Activated CD4-positive, alpha-beta memory T cell treated with anti-CD3 and anti-CD28 coated beads, Interleukin-2, amount 10 ng/mL, durations not matched to agents 7 days and 5 days (primary cell): ENCODE measurements at regions of chr3 and their contacts with region 1.

Region 1: DNA sequence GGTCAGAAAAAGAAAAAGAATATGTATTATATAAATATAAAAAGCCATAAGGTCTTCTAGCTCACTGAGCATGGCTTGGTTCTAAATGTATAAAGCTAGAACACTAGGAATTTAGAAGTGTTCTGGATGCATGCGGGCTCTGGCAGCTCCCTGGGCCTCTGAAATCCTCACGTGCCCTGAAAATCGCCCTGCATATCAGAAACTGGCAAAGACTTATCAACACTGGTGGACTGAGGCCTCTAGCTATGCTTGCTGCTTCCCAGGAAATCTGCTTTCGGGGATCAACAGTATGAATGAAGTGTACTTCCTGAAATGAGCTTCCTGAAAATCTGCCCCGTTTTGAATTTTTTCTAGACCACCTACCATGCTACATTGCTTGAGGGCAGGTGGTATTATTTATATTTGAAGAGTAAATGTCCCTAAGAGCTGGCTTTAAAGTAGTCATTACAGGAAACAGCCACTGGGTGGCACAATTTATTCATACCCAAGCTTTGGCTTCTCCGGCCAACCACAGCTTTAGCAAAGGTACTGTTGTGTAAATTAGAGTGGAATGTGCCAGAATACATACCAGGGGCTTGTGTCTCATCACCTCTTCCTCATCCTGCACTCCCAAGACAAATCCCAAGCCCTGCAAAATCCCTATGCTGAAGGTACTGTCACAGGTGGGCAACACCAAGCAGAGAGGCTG is 17.7 kb downstream of the CRTAP start:
- DNase-seq: peak; percentile 40
- H3K4me3 Mint-ChIP-seq: no peak overlapping the region
- H3K27ac Mint-ChIP-seq: no peak overlapping the region
- H3K4me1 Mint-ChIP-seq: peaks cover 4% of the 10 kb centered on the region
- H3K27me3 Mint-ChIP-seq: no peaks in the 10 kb centered on the region

Region 2: GRCh38 chr3:33115024-33115768 is 16.3 kb before region 1 on chr3:
- CTCF ChIA-PET with region 1: interaction called, 12 read pairs
- POLR2A ChIA-PET with region 1: interaction called, 4 read pairs
- DNase-seq: no peak
- H3K4me3 Mint-ChIP-seq: peak overlapping the region; percentile 79
- H3K27ac Mint-ChIP-seq: no peak overlapping the region
- H3K4me1 Mint-ChIP-seq: peaks cover 43% of the 10 kb centered on the region
- H3K27me3 Mint-ChIP-seq: no peaks in the 10 kb centered on the region